ENCODE measurements at regions of chr4 and their contacts with region 1.

Region 1: DNA sequence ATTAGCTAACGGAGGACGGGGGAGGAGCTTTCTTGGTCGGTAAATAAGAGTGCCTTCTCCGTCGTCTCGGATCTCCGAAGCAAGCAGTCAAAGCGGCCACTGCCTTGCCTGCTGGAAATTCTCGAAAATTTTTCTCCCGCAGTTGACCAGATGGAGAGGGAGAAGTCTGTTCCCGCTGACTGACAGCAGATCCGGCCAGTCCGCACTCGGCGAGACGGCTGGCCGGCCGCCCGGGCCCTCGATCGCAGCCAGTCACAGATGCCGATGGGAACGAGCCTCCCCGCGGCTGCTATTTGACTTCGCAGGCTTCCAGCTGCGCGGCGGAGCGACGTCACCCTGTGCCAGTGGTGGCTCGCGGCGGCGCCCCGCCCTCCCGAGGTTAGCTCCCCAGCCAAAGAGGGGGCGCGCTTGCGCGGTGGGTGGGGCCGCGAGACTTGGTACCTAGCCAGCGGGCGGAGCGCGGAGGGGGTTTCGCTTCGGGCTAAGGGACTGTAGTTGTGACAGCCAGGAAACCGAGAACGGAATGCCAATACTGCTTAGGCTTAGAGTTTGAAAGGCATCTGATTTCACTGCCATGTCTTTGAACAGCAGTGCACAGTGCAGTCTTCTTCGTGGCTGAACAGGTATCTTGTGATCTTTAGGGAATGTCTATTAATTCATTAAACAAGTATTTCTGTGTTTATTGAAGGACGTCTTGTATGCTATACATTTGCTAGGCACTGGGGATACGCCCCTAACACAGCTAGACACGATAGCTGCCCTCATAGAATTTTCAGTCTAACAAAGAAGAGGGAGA is at the start of gene PPM1K:
- DNase-seq: peak; percentile 100
- H3K4me3 ChIP-seq: peak within 1 kb of the TSS; percentile 91
- H3K27ac ChIP-seq: peak within 1 kb of the TSS; percentile 98 to 100
- H3K4me1 ChIP-seq: peaks cover 18% of the 10 kb centered on the region
- H3K27me3 ChIP-seq: no peaks in the 10 kb centered on the region
- CTCF ChIP-seq: peak in 2 of 3 donors; percentile 33 to 38
- EP300 ChIP-seq: peak; percentile 63
- POLR2A ChIP-seq: peak; percentile 92
- total RNA-seq, gene PPM1K: 34.2 to 111 (median 50.5) TPM

Region 2: DNA sequence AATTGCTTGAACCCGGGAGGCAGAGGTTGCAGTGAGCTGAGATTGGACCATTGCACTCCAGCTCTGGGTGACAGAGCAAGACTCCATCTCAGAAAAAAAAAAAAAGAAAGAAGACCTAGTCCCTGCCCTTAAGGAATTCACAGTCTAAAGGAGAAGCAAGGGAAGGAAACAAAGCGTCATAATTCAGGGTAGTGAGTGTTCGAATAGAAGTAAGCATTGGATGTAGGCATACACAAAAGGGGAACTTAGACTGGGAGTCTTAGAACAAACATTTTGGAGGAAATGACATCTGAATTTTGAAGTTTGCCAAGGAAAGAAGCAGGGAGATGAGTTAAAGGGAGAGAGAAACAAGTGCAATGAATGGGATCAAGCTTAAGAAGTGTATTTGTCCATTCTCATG is 32.7 kb before region 1 on chr4:
- intact Hi-C with region 1: no loop called
- DNase-seq: no peak
- H3K4me3 ChIP-seq: no peak overlapping the region
- H3K27ac ChIP-seq: no peak overlapping the region
- H3K4me1 ChIP-seq: no peaks in the 10 kb centered on the region
- H3K27me3 ChIP-seq: no peaks in the 10 kb centered on the region
- CTCF ChIP-seq: no peak
- EP300 ChIP-seq: no peak
- POLR2A ChIP-seq: no peak

Region 3: GRCh38 chr4:88341227-88342192 is 56.9 kb after region 1 on chr4:
- intact Hi-C with region 1: loop called in 1 of 4 experiments (anchors 10 kb)
- DNase-seq: peak; percentile 41 to 66 (median 43)
- H3K4me3 ChIP-seq: no peak overlapping the region
- H3K27ac ChIP-seq: peak overlapping the region; percentile 33 to 80
- H3K4me1 ChIP-seq: no peaks in the 10 kb centered on the region
- H3K27me3 ChIP-seq: no peaks in the 10 kb centered on the region
- CTCF ChIP-seq: no peak
- EP300 ChIP-seq: no peak
- POLR2A ChIP-seq: no peak

Region 4: DNA sequence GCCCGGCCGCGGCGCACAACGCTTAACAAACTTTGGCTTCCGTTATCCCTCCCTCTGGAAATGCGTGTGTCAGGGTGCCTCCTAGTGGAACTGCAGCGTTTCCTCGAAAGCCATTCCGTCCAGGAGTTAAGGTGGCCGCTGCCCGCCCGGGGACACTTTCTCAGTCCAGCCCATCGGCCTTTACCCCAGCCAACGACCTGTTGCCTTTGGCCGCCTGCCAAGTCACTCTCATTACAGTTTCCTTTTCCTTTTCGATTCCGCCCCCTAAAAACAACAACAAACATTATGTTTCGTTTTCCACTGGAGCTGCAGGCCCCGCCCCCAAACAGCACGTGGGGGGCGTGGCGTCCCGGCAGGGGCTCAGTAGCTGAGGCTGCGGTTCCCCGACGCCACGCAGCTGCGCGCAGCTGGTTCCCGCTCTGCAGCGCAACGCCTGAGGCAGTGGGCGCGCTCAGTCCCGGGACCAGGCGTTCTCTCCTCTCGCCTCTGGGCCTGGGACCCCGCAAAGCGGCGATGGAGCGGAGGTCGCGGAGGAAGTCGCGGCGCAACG is 172.2 kb after region 1 on chr4 and contains the start of gene HERC5:
- intact Hi-C with region 1: loop called in 1 of 4 experiments (anchors 5 kb)
- DNase-seq: peak; percentile 93 to 97 (median 95)
- H3K4me3 ChIP-seq: peak within 1 kb of the TSS; percentile 92
- H3K27ac ChIP-seq: peak within 1 kb of the TSS; percentile 89 to 92
- H3K4me1 ChIP-seq: no peaks in the 10 kb centered on the region
- H3K27me3 ChIP-seq: no peaks in the 10 kb centered on the region
- CTCF ChIP-seq: peak; percentile 61 to 84 (median 83)
- EP300 ChIP-seq: peak; percentile 56
- POLR2A ChIP-seq: peak; percentile 85
- total RNA-seq, gene HERC5: 10.5 to 20.9 (median 18.6) TPM

Measured in ovary (tissue), 10 donors.